PC-9 (cell line): ENCODE measurements at regions of chr4 and their contacts with region 1.

Region 1: DNA sequence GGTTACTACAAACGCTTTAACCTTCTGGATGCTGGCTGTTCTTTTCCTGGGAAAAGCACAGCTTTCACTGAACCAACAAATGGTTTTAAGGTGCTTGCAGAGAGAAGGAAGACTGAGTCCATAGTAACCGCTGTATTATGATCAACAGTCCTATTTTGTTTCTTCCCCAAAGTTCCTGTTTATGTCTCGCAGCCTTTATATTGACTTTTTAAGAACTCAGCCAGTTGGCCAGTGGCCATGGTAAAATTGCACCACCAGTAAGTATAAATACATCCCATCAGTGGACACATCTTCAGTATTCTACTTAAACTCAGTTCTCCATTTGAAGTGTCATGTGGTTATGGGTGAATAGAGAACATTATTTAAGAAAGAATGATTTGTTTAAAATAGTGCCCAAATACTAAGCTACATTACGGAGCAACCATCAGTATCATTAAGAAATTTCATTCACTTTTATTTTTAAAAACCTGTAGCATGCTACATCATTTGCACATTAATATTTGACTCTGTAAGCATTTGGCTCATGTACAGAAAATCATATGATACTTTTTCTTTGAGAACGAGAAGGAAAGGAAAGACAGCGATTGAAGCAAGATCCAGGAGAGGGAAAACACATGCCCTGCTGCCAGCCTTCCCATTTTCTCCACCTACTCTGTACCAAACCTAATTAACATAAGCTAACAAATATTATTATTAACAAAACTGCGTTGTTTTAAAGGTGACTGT is 287.0 kb downstream of the ARHGAP24 start:
- DNase-seq: no peak
- H3K4me3 ChIP-seq: no peak overlapping the region
- H3K27ac ChIP-seq: no peak overlapping the region
- H3K4me1 ChIP-seq: no peaks in the 10 kb centered on the region
- H3K27me3 ChIP-seq: no peaks in the 10 kb centered on the region
- CTCF ChIP-seq: no peak

Region 2: DNA sequence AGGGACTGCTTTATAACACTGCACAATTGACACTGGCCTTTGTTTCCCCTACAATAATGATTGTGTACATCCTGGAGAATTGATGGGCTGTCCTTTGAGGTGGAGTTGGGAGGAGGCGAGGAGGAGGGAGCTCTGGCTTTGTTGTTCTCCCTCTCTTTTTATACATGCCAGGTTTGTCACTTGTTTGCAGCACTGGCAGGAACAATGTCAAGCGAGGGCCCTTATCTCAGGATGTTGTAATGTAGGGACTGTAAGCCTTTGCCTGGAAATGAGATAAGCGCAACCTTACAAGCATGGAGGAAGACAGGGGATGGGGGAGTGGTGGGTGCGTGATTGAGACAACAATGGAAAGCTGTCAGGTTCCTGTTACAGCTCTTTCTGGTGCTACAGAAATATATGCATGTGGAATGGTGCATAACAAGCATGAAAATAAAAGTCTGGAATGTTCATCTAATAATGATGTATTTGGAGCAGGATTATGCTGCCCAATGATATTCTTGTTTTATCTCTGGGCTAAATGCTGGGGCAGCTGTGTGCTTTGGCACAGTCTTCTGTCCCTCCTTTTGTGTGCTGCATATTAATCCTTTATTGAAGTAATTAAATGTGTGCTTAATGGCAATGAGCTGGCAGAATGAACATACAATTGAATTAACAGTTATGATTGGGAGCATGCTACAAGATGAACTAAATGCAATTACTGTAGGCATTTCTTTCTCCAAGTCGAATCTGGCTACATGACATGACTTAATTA is 1931.7 kb before region 1 on chr4:
- CTCF ChIA-PET with region 1: no interaction called
- POLR2A ChIA-PET with region 1: interaction called, 11 read pairs
- intact Hi-C with region 1: no loop called
- DNase-seq: no peak
- H3K4me3 ChIP-seq: no peak overlapping the region
- H3K27ac ChIP-seq: no peak overlapping the region
- H3K4me1 ChIP-seq: no peaks in the 10 kb centered on the region
- H3K27me3 ChIP-seq: no peaks in the 10 kb centered on the region
- CTCF ChIP-seq: no peak

Region 3: DNA sequence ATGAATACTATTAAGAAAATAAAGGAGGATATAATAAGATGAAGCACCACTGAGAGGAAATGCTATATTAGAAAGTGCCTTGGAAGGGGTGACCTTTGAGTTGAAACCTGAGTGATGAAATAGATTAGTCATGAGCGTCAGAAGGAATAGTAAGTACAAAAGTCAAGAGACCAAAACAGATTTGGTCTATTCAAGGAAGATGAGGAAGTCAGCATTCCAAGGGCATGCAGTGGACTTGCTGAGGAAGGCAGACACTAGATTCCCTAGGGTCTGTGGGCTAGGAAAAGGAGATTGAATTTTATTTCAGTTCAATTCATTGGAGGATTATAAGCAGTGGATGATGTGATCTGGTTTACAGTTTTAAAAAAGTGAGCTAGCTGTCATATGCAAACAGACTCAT is 722.4 kb before region 1 on chr4:
- CTCF ChIA-PET with region 1: no interaction called
- POLR2A ChIA-PET with region 1: no interaction called
- intact Hi-C with region 1: no loop called
- DNase-seq: peak in 1 of 2 experiments; percentile 59
- H3K4me3 ChIP-seq: no peak overlapping the region
- H3K27ac ChIP-seq: peak overlapping the region; percentile 84
- H3K4me1 ChIP-seq: peaks cover 19% of the 10 kb centered on the region
- H3K27me3 ChIP-seq: no peaks in the 10 kb centered on the region
- CTCF ChIP-seq: no peak